ENCODE measurements at regions of chr14 and their contacts with region 1.

Region 1: DNA sequence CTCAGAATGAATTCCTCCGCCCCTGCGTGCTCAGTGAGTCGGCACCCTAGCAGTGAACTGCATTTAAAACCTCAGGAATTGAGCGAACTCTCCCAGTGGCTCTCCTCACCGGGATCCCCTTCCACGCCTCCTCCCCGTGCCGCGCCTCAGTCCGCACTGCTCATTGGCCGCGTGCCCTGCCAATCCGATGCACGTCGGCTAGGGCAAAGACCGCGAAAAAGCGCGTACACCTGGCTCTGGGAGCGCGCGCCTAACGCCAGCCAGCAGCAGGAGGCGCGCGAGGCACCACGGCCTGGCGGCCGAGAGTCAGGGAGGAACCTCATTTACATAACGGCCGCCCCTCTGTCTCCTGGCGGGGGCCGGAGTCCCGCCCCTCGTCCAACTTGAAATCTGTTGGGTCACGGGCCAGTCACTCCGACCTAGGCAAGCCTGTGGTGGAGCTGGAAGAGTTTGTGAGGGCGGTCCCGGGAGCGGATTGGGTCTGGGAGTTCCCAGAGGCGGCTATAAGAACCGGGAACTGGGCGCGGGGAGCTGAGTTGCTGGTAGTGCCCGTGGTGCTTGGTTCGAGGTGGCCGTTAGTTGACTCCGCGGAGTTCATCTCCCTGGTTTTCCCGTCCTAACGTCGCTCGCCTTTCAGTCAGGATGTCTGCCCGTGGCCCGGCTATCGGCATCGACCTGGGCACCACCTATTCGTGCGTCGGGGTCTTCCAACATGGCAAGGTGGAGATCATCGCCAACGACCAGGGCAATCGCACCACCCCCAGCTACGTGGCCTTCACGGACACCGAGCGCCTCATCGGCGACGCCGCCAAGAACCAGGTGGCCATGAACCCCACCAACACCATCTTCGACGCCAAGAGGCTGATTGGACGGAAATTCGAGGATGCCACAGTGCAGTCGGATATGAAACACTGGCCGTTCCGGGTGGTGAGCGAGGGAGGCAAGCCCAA is at the start of gene HSPA2:
- DNase-seq: peak; percentile 94 to 97
- ATAC-seq: peak; percentile 91 to 97 (median 91)
- H3K4me3 ChIP-seq: peak within 1 kb of the TSS; percentile 96
- H3K4me3 Mint-ChIP-seq: peak within 1 kb of the TSS; percentile 100
- H3K27ac ChIP-seq: peak within 1 kb of the TSS; percentile 61
- H3K27ac Mint-ChIP-seq: peak within 1 kb of the TSS; percentile 91 to 93
- H3K4me1 ChIP-seq: peaks cover 34% of the 10 kb centered on the region
- H3K4me1 Mint-ChIP-seq: peaks cover 34 to 44% of the 10 kb centered on the region in 2 donors
- H3K27me3 ChIP-seq: peaks cover 9% of the 10 kb centered on the region
- H3K27me3 Mint-ChIP-seq: peaks cover 13 to 25% of the 10 kb centered on the region in 2 donors
- CTCF ChIP-seq: peak; percentile 64
- total RNA-seq, gene HSPA2: 1.1 to 1.5 (median 1.1) TPM

Region 2: DNA sequence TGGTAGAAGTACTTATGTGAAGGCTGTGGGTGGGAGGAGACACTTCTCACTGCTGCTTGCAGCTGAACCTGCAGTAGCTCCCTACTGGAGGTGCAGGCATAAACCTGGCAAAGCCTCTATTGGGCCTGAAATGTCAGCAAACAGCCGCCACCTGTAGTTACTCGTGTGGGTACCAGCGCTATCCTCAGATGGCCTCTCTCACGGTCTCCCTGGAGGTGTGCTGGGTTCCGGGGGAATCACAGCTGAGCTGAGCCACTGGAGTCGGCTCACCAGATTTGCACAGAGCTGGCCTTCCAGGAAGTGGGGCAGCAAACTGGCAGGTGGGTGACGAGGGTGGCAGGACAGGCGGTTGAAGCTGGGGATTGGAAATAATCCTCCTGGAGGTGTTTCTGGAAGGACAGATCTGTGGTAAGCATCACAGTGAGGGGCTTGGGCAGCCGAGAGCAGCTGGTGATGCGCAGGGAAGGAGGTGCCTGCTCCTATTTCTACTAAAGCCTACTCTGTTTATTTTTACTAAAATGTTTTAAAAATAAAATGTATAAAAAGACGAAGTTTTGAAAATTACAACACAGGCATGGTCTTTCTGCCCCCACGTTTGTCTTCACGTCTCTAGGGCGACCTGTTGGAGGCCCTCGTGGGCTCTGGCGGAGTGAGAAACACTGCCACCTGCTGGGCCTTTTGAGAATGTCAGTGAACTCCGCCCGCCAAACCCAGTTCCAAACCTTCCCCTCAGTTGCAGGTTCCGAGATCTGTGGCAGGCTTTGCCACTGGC is 95.9 kb after region 1 on chr14:
- intact Hi-C with region 1: loop called (anchors 2 kb)
- DNase-seq: peak; percentile 65 to 85
- ATAC-seq: peak; percentile 89 to 99 (median 99)
- H3K4me3 ChIP-seq: no peak overlapping the region
- H3K4me3 Mint-ChIP-seq: no peak overlapping the region
- H3K27ac ChIP-seq: no peak overlapping the region
- H3K27ac Mint-ChIP-seq: no peak overlapping the region
- H3K4me1 ChIP-seq: peaks cover 6% of the 10 kb centered on the region
- H3K4me1 Mint-ChIP-seq: no peaks in the 10 kb centered on the region
- H3K27me3 ChIP-seq: no peaks in the 10 kb centered on the region
- H3K27me3 Mint-ChIP-seq: peaks cover 0 to 3% of the 10 kb centered on the region in 2 donors
- CTCF ChIP-seq: peak; percentile 88

Region 3: GRCh38 chr14:64663174-64663573 is 122.7 kb after region 1 on chr14:
- intact Hi-C with region 1: no loop called
- DNase-seq: no peak
- ATAC-seq: no peak
- H3K4me3 ChIP-seq: no peak overlapping the region
- H3K4me3 Mint-ChIP-seq: no peak overlapping the region
- H3K27ac ChIP-seq: no peak overlapping the region
- H3K27ac Mint-ChIP-seq: no peak overlapping the region
- H3K4me1 ChIP-seq: peaks cover 9% of the 10 kb centered on the region
- H3K4me1 Mint-ChIP-seq: peaks cover 13 to 15% of the 10 kb centered on the region in 2 donors
- H3K27me3 ChIP-seq: no peaks in the 10 kb centered on the region
- H3K27me3 Mint-ChIP-seq: peaks cover 9 to 10% of the 10 kb centered on the region in 2 donors
- CTCF ChIP-seq: no peak

Region 4: DNA sequence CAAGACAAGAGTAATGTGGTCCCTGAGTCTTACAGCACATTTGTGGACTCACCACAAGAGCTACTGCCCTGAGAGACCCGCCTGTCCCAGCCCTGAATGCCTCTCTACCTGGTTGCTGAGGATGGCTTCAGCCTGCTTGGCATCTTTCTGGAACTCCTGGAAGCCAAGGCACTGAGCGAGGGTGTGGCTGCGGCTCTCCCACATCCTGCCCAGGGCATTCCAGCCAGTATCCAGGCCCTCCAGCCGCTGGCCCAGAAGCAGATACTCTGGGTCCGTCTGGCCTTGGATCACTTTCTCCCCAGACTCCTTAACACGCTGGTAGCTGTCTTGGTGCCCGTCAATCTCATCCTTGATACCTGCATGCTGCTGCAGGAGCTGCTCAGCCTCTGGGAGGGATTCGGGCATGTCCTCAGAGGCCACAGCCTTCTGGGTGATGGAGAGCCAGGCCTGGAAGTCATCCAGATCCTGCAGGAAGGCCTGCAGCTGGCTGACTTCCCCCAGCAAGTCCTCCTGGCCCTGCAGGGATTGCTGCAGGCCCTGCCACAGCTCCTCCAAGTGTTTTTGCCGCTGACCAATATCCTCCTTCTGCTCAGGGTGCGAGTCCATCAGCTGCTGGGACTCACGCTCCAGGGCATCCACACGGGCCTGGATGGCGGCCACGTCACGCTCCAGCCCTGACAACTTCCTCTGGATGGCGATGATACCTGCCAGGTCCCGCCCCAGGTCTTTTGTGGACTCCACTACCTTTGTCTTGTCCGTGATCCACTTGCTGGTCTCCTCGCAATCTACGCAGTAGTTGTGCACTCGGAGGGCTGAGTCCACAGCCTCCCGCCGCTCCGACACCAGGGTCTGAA is 246.0 kb after region 1 on chr14:
- intact Hi-C with region 1: no loop called
- DNase-seq: no peak
- ATAC-seq: no peak
- H3K4me3 ChIP-seq: no peak overlapping the region
- H3K4me3 Mint-ChIP-seq: no peak overlapping the region
- H3K27ac ChIP-seq: no peak overlapping the region
- H3K27ac Mint-ChIP-seq: no peak overlapping the region
- H3K4me1 ChIP-seq: no peaks in the 10 kb centered on the region
- H3K4me1 Mint-ChIP-seq: no peaks in the 10 kb centered on the region
- H3K27me3 ChIP-seq: no peaks in the 10 kb centered on the region
- H3K27me3 Mint-ChIP-seq: no peaks in the 10 kb centered on the region
- CTCF ChIP-seq: no peak